ENCODE measurements at regions of chr17 and their contacts with region 1.

Region 1: DNA sequence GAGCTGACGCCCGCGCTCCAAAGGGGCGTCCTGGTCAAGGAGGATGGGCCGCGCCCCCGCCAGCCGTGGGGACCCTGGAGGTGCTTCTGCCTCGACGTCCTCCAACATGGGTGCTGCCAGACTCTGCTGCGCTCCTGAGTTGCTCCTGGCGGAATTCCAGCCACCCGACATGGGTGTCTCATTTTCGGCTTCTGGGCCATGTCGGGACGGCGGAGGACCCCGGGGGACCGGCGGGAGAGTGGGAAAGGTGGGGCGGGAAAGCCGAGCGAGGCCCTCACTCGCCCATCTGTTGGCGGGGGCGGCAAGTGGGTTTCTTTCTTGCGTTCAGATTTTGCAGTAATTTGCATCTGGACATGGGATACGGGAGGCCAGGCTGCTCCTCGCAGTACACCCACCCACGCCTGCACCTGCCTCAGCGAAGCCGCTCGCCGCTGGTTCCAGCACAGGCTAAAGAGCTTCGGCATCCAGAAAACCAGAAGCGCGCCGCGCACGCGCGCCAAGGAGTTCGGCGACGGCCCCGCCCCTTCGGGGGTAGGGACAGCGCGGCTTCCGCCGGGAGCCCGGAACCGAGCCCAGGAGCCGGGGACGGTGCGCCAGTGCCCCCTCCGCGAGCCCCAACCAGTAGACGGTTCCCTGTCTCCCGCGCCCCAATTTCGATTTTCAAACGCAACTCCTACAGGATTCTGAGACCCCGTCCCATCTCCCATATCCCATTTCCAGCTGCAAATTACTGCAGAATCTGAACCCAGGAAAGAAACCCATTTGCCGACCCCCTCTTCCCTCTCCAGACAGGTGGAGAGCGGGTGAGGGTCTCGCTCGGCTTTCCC is at the start of gene ARMC7:
- DNase-seq: peak; percentile 92
- ATAC-seq: peak; percentile 80
- H3K4me3 ChIP-seq: peak within 1 kb of the TSS; percentile 80 to 94 (median 84)
- H3K4me3 Mint-ChIP-seq: peak within 1 kb of the TSS; percentile 90
- H3K27ac ChIP-seq: peak within 1 kb of the TSS; percentile 54 to 56
- H3K27ac Mint-ChIP-seq: peak within 1 kb of the TSS; percentile 90
- H3K4me1 ChIP-seq: peaks cover 25 to 29% of the 10 kb centered on the region in 2 donors
- H3K4me1 Mint-ChIP-seq: peaks cover 31% of the 10 kb centered on the region
- H3K27me3 ChIP-seq: peaks cover 0 to 2% (median 0%) of the 10 kb centered on the region in 4 experiments
- H3K27me3 Mint-ChIP-seq: no peaks in the 10 kb centered on the region
- CTCF ChIP-seq: no peak
- total RNA-seq, gene ARMC7: 15.7 and 15.9 TPM in 2 replicates

Region 2: GRCh38 chr17:75069783-75070182 is 39.8 kb before region 1 on chr17:
- CTCF ChIA-PET with region 1: interaction called, 17 read pairs
- POLR2A ChIA-PET with region 1: no interaction called
- intact Hi-C with region 1: no loop called
- DNase-seq: no peak
- ATAC-seq: no peak
- H3K4me3 ChIP-seq: no peak overlapping the region
- H3K4me3 Mint-ChIP-seq: no peak overlapping the region
- H3K27ac ChIP-seq: no peak overlapping the region
- H3K27ac Mint-ChIP-seq: no peak overlapping the region
- H3K4me1 ChIP-seq: no peaks in the 10 kb centered on the region
- H3K4me1 Mint-ChIP-seq: no peaks in the 10 kb centered on the region
- H3K27me3 ChIP-seq: no peaks in the 10 kb centered on the region
- H3K27me3 Mint-ChIP-seq: no peaks in the 10 kb centered on the region
- CTCF ChIP-seq: no peak

Region 3: GRCh38 chr17:75144816-75145512 is 35.3 kb after region 1 on chr17:
- CTCF ChIA-PET with region 1: interaction called, 10 read pairs
- POLR2A ChIA-PET with region 1: no interaction called
- intact Hi-C with region 1: no loop called
- DNase-seq: no peak
- ATAC-seq: no peak
- H3K4me3 ChIP-seq: no peak overlapping the region
- H3K4me3 Mint-ChIP-seq: no peak overlapping the region
- H3K27ac ChIP-seq: no peak overlapping the region
- H3K27ac Mint-ChIP-seq: no peak overlapping the region
- H3K4me1 ChIP-seq: peaks cover 14 to 15% of the 10 kb centered on the region in 2 donors
- H3K4me1 Mint-ChIP-seq: peaks cover 18% of the 10 kb centered on the region
- H3K27me3 ChIP-seq: no peaks in the 10 kb centered on the region
- H3K27me3 Mint-ChIP-seq: no peaks in the 10 kb centered on the region
- CTCF ChIP-seq: no peak

Region 4: GRCh38 chr17:75173526-75173925 is 63.9 kb after region 1 on chr17:
- CTCF ChIA-PET with region 1: interaction called, 373 read pairs
- POLR2A ChIA-PET with region 1: interaction called, 22 read pairs
- intact Hi-C with region 1: loop called (anchors 1 kb)
- DNase-seq: no peak
- ATAC-seq: no peak
- H3K4me3 ChIP-seq: no peak overlapping the region
- H3K4me3 Mint-ChIP-seq: no peak overlapping the region
- H3K27ac ChIP-seq: no peak overlapping the region
- H3K27ac Mint-ChIP-seq: no peak overlapping the region
- H3K4me1 ChIP-seq: peaks cover 6 to 8% of the 10 kb centered on the region in 2 donors
- H3K4me1 Mint-ChIP-seq: peaks cover 13% of the 10 kb centered on the region
- H3K27me3 ChIP-seq: no peaks in the 10 kb centered on the region
- H3K27me3 Mint-ChIP-seq: no peaks in the 10 kb centered on the region
- CTCF ChIP-seq: no peak

Region 5: DNA sequence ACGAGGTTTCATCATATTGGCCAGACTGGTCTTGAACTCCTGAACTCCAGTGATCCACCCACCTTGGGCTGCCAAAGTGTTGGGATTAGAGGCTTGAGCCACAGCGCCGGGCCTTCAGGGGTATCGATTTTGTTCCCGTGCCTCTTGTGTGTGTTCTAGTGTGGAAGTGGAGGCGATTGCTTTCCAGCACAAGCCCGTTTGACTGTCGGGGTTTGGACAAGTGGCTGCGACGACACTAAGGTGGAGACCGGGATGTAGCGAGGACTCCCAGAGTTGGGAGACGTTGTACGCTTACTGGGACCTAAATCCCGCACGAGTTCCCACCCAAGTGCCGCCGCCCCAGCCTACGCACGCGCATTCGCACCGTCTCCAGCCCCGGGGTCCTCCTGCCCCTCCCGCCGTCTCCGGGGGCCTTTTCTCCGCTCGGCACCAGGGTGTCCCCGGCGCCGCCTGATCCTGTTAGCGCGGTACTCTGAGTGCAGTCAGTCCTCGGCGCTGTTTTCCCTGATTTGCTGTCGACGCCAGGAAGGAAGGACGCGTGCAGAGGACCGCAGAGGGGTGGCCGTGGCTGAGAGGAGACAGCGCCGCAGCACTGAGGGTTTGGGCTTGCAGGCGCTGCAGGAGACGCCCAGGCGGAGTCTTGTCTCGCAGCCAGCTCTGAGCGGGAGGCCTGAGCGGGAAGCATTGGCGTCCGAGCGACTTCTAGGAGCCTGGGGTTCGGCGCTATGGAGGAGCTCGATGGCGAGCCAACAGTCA is 95.6 kb after region 1 on chr17 and contains the start of gene NUP85:
- CTCF ChIA-PET with region 1: interaction called, 249 read pairs
- POLR2A ChIA-PET with region 1: interaction called, 12 read pairs
- intact Hi-C with region 1: loop called (anchors 1 kb)
- DNase-seq: peak; percentile 97
- ATAC-seq: peak; percentile 90
- H3K4me3 ChIP-seq: peak within 1 kb of the TSS; percentile 67 to 98 (median 92)
- H3K4me3 Mint-ChIP-seq: peak within 1 kb of the TSS; percentile 99
- H3K27ac ChIP-seq: peak within 1 kb of the TSS; percentile 83 to 85
- H3K27ac Mint-ChIP-seq: peak within 1 kb of the TSS; percentile 100
- H3K4me1 ChIP-seq: peaks cover 9 to 21% of the 10 kb centered on the region in 2 donors
- H3K4me1 Mint-ChIP-seq: peaks cover 26% of the 10 kb centered on the region
- H3K27me3 ChIP-seq: no peaks in the 10 kb centered on the region
- H3K27me3 Mint-ChIP-seq: no peaks in the 10 kb centered on the region
- CTCF ChIP-seq: no peak
- total RNA-seq, gene NUP85: 128 and 142 TPM in 2 replicates

Region 6: DNA sequence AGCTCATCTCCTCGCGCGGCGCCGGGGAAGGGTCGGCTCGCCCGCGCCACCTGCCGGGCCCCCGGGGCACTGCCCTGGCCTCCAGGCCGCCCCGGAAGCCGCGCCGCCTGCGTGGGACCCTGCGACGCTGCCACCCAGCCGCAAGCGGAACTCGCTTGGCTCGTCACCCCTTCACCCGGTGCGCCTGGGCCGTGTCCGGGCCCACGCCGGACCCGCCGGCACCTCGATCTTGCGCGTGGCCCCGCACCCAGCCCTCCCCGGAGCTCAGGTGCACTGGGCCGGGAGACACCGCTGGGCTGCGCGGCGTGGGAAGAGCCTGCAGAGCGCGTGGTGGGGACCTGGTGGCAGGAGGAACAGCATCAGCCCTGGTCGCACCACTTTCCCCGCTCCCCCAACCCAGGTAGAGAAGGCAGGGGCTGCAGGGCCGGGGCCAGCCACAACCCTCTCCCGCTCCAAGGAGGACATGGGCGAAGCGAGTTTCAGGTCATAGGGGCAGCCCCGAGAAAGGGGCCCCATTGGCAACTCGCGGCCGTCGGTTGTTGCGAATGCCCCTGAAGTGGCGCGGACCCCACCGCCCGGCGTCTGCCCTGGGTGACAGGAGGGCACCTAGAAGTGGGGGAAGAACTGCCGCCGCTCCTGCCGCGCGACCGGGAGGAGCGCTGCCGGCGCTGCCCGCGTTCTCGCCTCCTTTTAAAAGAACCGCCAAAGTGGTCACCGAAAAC is 161.8 kb after region 1 on chr17:
- CTCF ChIA-PET with region 1: interaction called, 15 read pairs
- POLR2A ChIA-PET with region 1: interaction called, 5 read pairs
- intact Hi-C with region 1: no loop called
- DNase-seq: peak; percentile 94
- ATAC-seq: peak; percentile 90
- H3K4me3 ChIP-seq: peak overlapping the region; percentile 26 to 93 (median 74)
- H3K4me3 Mint-ChIP-seq: peak overlapping the region; percentile 88
- H3K27ac ChIP-seq: peak overlapping the region; percentile 78 to 83
- H3K27ac Mint-ChIP-seq: peak overlapping the region; percentile 82
- H3K4me1 ChIP-seq: peaks cover 17 to 28% of the 10 kb centered on the region in 2 donors
- H3K4me1 Mint-ChIP-seq: peaks cover 23% of the 10 kb centered on the region
- H3K27me3 ChIP-seq: no peaks in the 10 kb centered on the region
- H3K27me3 Mint-ChIP-seq: no peaks in the 10 kb centered on the region
- CTCF ChIP-seq: peak; percentile 73

Measured in B cell (primary cell).